Left ventricle myocardium superior (tissue), 1 donor: ENCODE measurements at regions of chr13 and their contacts with region 1.

Region 1: GRCh38 chr13:48233046-48233907 is at the start of gene ITM2B:
- DNase-seq: peak; percentile 90
- ATAC-seq: peak; percentile 92
- total RNA-seq, gene ITM2B: 519 TPM

Region 2: DNA sequence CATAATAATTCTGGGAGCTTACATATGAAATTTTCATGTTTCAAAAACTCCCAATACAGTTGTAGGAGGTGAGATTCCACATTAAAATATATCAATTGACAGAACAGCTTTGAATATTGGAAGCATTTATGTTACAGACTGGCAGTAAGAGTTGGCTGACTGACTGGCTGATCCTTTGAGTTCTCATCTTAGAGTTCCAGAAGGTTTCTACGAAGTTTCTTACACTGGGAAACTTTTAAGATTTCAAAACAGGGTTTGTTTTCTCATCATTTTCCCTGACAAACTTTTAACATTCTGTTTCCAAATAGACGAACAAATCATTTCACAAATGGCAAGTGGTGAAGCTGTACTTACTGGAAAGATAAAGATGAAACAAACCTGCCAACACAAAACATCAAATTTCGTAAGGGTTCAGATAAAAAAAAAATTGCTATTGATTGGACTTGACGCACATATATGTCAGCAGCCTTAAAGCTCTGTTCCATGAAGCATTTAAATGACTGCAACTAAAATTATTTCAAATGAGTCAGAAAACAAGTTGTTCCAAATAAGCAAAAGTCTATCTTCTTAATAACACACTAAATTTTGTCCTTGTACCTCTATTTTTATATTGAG is 475.7 kb before region 1 on chr13:
- intact Hi-C with region 1: no loop called
- DNase-seq: no peak
- ATAC-seq: no peak

Region 3: GRCh38 chr13:48110931-48111721 is 122.2 kb before region 1 on chr13:
- intact Hi-C with region 1: loop called (anchors 10 kb)
- DNase-seq: peak; percentile 55
- ATAC-seq: peak; percentile 89

Region 4: GRCh38 chr13:48194379-48194754 is 38.9 kb before region 1 on chr13:
- intact Hi-C with region 1: no loop called
- DNase-seq: no peak
- ATAC-seq: peak; percentile 28